Heart left ventricle (tissue), 16 donors: ENCODE measurements at regions of chr11 and their contacts with region 1.

Region 1: DNA sequence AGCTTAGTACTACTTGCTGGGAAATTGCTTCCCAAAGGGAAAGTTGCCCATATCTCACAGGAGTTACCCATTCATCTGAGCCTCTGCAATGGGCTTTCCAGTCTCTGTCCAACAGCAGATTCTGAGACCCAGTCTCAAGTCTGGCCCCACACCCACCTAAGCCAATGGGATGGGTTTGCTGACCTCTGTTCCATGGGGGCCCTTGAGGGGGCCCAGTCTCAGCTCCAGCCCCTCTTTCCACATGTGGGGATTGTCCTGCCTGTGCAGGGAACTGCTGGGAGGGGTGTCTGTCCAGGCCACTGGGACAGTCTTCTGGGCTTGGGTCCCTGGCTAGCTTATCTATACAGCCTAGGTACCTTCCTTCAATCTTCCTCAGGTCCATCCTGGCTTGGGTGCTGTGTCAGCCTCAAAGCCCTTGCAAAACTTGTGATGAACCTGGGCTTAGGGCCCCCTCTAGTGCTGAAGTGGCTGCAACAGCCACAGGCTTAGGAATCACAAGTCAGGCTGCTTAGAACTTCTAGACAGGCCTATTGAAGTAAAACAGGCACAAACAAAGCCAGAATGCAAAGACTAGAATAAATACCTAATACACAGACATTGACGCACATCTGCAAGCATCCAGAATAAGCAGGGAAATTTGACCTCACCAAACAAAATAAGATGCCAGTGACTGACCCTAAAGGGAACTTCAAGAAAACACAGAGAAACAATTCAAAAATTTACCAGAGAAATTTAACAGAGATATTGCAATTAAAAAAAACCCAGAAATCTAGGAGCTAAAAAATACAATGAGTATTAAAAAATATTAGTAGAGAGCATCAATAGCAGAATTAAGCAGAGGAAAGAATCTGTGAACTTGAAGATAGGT is 11.7 kb upstream of the PATL1 start:
- DNase-seq: peak in 4 of 5 donors; percentile 38 to 65 (median 59)
- ATAC-seq: peak; percentile 71 to 94 (median 90)
- H3K4me3 ChIP-seq: no peak overlapping the region
- H3K27ac ChIP-seq: no peak overlapping the region
- H3K4me1 ChIP-seq: no peaks in the 10 kb centered on the region
- H3K27me3 ChIP-seq: peaks cover 0 to 4% (median 0%) of the 10 kb centered on the region in 9 donors
- CTCF ChIP-seq: peak; percentile 49 to 72 (median 62)
- POLR2A ChIP-seq: no peak

Region 2: DNA sequence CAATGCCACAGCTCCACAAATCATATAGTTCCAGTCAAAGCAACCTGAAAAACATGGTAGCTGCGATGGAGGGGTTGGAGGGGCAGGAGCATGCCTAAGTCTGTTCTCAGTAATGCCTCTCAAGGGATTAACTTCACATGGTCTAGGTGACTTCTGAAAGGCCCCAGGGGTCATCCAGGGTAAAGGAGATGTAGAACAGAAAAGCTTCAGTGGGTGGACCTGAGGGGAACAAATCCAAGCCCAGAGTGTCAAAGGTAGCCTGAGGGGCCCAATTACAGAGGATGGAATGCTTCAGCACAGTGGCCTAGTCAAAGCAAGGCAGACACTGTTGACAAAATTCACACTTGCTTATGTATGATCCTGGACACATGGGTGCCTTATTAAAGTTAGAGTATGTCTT is 145.8 kb before region 1 on chr11:
- intact Hi-C with region 1: loop called in 8 of 10 experiments (anchors 1 to 5 kb)
- DNase-seq: no peak
- ATAC-seq: no peak
- H3K4me3 ChIP-seq: no peak overlapping the region
- H3K27ac ChIP-seq: no peak overlapping the region
- H3K4me1 ChIP-seq: peaks cover 0 to 10% (median 0%) of the 10 kb centered on the region in 12 donors
- H3K27me3 ChIP-seq: no peaks in the 10 kb centered on the region
- CTCF ChIP-seq: no peak
- POLR2A ChIP-seq: no peak

Region 3: DNA sequence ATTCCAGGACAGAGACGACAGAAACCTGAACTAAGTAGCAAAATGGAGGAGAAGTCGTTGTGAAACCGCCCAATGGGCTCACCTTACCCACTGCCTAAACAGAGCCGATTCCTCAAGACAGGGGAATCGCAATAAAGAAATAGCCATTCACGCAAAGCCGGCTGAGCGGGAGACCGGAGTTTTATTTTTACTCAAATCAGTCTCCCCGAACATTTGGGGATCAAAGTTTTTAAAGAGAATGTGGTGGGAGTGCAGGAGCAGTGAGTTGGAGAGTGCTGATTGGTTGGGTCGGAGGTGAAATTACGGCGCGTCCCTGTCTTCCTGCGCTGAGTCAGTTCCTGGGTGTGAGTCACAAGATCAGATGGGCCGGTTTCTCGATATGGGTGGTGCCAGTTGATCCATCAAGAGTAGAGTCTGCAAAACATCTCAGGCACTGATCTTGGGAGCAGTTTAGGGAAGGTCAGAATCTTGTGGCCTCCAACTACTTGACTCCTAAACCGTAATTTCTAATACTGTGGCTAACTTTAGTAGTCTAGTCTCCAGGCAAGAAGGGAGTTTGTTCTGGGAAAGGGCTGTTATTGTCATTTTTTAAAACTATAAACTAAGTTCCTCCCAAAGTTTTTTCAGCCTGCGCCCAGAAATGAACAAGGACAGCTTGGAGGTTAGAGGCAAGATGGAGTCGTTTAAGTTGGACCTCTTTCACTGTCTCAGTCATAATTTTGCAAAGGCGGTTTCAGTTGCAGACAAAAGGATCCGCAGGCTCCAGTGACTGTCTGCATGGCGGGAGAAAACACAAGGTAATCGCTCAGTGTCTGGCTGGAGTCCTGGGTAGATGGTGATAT is 135.1 kb before region 1 on chr11:
- intact Hi-C with region 1: loop called in 2 of 10 experiments (anchors 5 to 10 kb)
- DNase-seq: no peak
- ATAC-seq: no peak
- H3K4me3 ChIP-seq: no peak overlapping the region
- H3K27ac ChIP-seq: no peak overlapping the region
- H3K4me1 ChIP-seq: peaks cover 0 to 25% (median 0%) of the 10 kb centered on the region in 12 donors
- H3K27me3 ChIP-seq: no peaks in the 10 kb centered on the region
- CTCF ChIP-seq: no peak
- POLR2A ChIP-seq: no peak

Region 4: GRCh38 chr11:59698506-59698905 is 18.0 kb after region 1 on chr11:
- intact Hi-C with region 1: no loop called
- DNase-seq: no peak
- ATAC-seq: no peak
- H3K4me3 ChIP-seq: no peak overlapping the region
- H3K27ac ChIP-seq: no peak overlapping the region
- H3K4me1 ChIP-seq: no peaks in the 10 kb centered on the region
- H3K27me3 ChIP-seq: no peaks in the 10 kb centered on the region
- CTCF ChIP-seq: no peak
- POLR2A ChIP-seq: no peak